ENCODE measurements at regions of chr19 and their contacts with region 1.

Region 1: DNA sequence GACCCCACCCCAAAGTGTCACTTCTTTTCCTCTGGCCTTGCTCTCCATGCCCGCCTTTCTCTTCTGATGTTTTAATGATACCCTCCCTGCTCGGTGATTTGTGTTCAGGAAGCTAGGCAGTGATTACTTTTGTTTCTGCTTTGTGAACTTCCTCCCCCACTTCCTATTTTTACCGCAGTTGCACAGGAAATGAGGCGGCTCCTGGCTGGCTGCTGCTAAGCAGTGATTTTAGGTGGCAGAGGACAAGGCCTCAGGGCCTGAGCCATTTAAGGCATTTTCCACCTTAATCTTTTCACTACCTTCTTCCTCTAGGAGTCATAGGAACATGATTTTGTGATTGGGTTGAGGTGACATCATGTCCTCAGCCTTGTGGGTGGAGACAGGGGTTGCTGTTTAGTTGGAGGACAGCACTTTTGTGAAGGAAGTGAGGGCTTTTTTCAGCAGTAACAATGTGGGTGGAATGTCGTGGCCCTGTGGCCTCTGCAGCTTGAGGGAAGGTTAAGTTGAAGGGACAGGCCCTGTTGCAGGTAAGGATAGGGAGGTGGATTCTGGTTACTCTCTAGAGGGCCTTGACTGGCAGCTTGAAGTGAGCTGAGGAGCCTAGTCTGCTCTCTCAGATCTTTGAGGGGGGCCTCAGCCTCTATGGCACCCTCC is 15.7 kb downstream of the GARRE1 start:
- DNase-seq: peak; percentile 76
- ATAC-seq: peak; percentile 67

Region 2: GRCh38 chr19:34317311-34317927 is 47.3 kb after region 1 on chr19:
- intact Hi-C with region 1: loop called (anchors 5 kb)
- DNase-seq: no peak
- ATAC-seq: peak; percentile 33

Region 3: GRCh38 chr19:34332027-34332760 is 62.1 kb after region 1 on chr19:
- intact Hi-C with region 1: loop called (anchors 5 kb)
- DNase-seq: no peak
- ATAC-seq: no peak

Measured in Right ventricle myocardium inferior (tissue), 1 donor.